BJ (cell line): ENCODE measurements at regions of chr17 and their contacts with region 1.

Region 1: DNA sequence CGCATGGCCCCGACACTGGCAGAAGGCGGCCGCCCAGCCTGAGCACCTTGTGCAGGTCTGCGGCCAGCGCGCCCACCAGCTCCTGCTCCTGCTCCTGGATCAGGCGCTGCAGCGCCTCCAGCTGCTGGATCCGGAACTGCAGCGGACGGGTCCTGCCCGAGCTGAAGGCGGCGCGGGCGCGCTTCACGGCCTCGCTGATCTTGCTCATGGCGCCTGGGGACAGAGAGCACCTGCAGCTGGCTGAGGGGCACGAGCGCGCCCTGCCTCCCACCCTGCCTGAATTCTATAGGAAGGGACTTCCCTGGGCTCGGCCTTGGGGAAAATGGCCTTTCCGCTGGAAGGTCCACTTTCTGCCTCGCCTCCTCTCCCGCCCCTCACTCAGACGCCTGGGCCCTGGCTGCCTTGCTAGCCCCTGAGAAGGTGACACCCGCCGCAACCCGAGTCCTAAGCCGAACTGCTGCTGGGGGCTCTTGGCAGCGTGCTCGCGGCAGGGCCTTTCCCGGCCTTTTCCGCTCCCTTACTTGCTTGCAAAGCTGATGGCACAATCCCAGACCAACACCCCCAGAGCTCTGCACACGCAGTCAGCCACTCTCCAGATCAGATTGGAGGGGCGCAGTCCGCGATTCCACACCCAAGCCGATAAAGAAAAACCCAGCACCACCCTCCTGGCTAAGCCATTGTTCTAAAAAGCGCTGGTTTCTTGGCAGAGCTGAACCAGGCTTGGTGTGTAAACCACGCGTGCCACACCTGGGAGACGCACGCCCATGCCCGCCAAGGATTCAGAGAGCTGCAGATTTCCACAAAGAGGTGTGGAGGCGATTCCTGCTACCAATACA is 3.0 kb downstream of the ALDH3A1 start:
- DNase-seq: no peak
- H3K4me3 ChIP-seq: peak overlapping the region; percentile 21
- H3K27me3 ChIP-seq: peaks cover 7% of the 10 kb centered on the region; the same call in 1 of the 2 replicates
- CTCF ChIP-seq: peak; percentile 95

Region 2: DNA sequence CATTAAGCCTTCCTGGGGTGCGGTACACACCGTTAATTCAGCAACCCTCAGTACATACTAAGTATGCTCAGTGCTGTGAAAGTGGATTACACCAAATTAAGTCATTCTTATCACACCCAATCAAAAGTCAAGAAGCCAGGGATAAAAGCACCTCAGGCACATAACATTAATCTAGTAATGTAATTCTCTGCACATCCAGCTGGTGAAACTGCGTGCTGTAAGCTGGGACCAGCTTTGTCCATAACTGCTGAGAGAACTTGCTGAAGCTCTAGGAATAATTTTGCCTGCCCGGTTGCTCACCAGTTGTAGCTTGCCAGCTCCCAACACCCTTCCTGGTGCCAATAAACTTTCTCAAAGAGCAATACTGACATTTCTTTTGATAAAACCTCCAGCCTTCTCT is 166.6 kb before region 1 on chr17:
- CTCF ChIA-PET with region 1: no interaction called
- POLR2A ChIA-PET with region 1: no interaction called
- DNase-seq: no peak
- H3K4me3 ChIP-seq: no peak overlapping the region
- H3K27me3 ChIP-seq: peaks cover 22% of the 10 kb centered on the region
- CTCF ChIP-seq: no peak

Region 3: GRCh38 chr17:19648475-19649406 is 96.4 kb before region 1 on chr17 and contains the start of gene ALDH3A2:
- CTCF ChIA-PET with region 1: interaction called, 10 read pairs
- POLR2A ChIA-PET with region 1: no interaction called
- DNase-seq: peak; percentile 46
- H3K4me3 ChIP-seq: peak within 1 kb of the TSS; percentile 58
- H3K27me3 ChIP-seq: no peaks in the 10 kb centered on the region
- CTCF ChIP-seq: peak; percentile 21; the same call in 1 of the 2 replicates
- polyA plus RNA-seq, gene ALDH3A2: 10.2 and 13.6 TPM in 2 replicates

Region 4: DNA sequence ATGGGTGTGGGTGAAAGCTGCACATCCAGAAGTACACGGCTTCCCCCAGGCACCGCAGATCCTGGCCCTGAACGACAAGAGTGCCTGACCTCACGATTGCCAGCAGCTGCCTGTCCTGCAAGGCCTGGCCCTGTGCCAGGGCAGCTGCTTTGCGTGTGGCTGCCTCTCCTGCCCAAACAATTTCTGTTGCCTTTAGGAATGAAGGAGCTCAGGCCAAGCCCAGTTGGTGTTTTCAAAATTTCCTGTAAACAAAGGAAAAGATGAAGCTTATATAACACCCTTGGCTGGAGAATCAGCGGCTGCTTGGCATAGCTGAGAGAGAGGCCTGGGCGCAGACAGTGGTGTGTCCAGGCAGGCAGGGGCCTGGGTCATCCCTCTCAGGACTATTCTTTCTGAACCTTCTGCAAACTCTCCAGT is 17.1 kb before region 1 on chr17:
- CTCF ChIA-PET with region 1: interaction called, 34 read pairs
- POLR2A ChIA-PET with region 1: no interaction called
- DNase-seq: peak; percentile 72
- H3K4me3 ChIP-seq: no peak overlapping the region
- H3K27me3 ChIP-seq: peaks cover 6% of the 10 kb centered on the region
- CTCF ChIP-seq: no peak

Region 5: DNA sequence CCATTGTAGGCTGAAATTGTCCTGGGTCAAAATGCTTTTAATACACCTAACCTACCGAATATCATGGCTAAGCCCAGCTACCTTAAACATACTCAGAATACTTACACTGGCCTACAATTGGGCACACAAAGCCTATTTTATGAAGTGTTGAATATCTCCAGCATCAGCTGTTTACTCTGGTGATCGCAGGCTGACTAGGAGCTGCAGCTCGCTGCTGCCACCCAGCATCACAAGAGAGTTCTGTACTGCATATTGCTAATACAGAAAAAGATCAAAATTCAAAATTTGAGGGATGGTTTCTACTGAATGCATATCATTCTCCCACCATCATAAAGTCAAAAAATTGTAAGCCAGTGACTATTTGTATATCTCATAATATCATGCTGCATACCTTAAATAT is 67.3 kb after region 1 on chr17:
- CTCF ChIA-PET with region 1: no interaction called
- POLR2A ChIA-PET with region 1: no interaction called
- DNase-seq: no peak
- H3K4me3 ChIP-seq: no peak overlapping the region
- H3K27me3 ChIP-seq: no peaks in the 10 kb centered on the region
- CTCF ChIP-seq: peak; percentile 60